ENCODE measurements at regions of chr13 and their contacts with region 1.

Region 1: GRCh38 chr13:43041369-43041921 is 18.1 kb downstream of the DNAJC15 start:
- DNase-seq: no peak
- H3K4me3 Mint-ChIP-seq: no peak overlapping the region
- H3K27ac Mint-ChIP-seq: no peak overlapping the region
- H3K4me1 Mint-ChIP-seq: peaks cover 62% of the 10 kb centered on the region
- H3K27me3 Mint-ChIP-seq: no peaks in the 10 kb centered on the region

Region 2: DNA sequence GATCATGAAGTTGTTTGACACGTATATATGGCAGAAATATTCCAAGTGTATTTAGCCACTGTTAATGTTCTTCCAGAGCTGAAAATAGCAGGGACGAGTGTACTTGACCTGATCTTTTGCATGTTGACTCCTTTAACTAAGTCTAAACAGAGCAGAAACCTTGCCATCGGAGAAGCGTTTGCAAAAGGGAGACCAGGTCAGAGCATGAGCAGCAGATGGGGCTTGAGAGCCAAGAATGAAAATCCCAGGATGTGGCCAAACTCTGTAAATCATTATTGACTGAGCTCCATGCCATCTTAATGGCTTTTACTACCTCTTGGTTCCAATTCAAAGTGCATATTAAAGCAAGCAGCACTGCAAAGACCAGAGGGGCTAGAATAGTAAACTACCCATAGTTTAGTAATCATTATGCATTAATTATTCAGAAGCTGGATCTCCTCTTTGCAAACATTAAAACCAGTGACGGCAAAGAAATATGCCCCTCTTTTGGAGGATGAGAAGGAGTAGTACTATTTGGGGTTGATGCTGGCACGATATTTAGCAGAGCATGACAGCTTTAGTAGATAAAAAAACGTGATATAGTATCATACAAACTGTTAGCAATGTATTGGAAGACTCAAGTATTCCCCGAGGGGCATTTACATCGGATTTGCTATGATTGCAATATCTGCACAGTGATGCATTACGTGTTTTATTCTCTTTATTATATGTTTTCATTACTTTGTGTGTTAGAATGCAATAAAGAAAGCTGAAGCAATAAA is 204.3 kb before region 1 on chr13:
- CTCF ChIA-PET with region 1: no interaction called
- POLR2A ChIA-PET with region 1: no interaction called
- intact Hi-C with region 1: no loop called
- DNase-seq: no peak
- H3K4me3 Mint-ChIP-seq: no peak overlapping the region
- H3K27ac Mint-ChIP-seq: no peak overlapping the region
- H3K4me1 Mint-ChIP-seq: peaks cover 3% of the 10 kb centered on the region
- H3K27me3 Mint-ChIP-seq: peaks cover 1% of the 10 kb centered on the region

Region 3: DNA sequence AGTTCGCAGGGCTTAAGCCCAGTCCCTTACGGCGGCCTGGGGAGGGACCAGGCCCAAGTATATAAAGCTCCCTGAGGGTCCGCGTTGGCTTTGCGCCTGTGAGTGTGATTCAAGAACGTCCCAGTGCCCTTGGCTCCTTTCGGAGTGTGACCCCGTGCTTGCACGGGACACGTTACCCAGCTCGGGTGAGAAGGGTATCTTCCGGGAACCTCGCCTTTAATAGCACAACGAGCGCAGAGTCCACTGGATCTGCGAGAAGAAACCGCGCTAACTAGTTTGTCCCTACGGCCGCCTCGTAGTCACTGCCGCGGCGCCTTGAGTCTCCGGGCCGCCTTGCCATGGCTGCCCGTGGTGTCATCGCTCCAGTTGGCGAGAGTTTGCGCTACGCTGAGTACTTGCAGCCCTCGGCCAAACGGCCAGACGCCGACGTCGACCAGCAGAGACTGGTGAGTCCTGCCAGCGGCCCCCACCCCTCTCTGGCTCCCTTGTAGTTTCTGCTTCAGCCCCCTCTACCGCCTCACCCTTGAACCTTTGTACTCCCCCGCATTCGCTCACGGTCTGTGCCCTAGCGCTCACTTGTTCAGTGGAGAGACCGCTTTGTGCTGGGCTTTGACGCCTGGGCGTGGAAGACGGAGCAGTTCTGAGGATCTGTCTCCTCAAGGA is 18.0 kb before region 1 on chr13 and contains the start of gene DNAJC15:
- CTCF ChIA-PET with region 1: no interaction called
- POLR2A ChIA-PET with region 1: interaction called, 6 read pairs
- intact Hi-C with region 1: loop called (anchors 2 kb)
- DNase-seq: peak; percentile 89
- H3K4me3 Mint-ChIP-seq: peak within 1 kb of the TSS; percentile 97
- H3K27ac Mint-ChIP-seq: peak within 1 kb of the TSS; percentile 93
- H3K4me1 Mint-ChIP-seq: peaks cover 30% of the 10 kb centered on the region
- H3K27me3 Mint-ChIP-seq: no peaks in the 10 kb centered on the region
- total RNA-seq, gene DNAJC15: 16.4 to 17.4 TPM

Region 4: DNA sequence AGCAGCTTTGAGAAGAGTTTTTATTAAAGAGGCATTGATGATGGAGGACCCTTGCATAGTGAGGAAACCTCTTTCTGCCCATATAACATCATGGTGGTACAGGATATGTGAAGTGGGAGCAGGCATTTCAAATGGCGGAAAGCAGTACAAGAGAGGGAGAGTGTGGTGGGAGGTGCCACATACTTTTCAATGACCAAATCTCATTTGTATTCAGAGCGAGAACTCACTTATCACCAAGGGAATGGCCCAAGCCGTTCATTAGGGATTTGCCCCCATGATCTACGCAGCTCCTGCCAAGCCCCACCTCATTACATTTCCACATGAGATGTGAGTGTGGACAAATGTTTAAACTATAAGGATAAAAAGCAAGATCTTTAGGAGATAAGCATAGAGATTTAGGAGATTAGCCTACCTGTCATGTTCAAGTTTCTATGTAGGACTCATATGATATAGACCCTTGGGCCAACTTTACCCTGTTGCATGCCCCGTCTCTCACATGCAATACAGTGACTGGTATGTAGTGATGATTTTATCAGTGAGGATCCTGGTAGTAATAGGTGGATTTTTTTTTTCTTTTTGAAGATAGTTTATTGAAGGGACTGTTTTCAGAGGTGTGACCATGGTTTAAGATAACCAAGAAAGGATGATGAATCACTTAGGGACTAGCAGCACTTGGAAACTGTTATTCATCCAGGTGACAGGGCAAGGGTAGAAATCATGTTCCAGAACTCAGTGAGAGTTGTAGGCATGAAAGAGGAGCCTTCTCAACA is 20.2 kb after region 1 on chr13:
- CTCF ChIA-PET with region 1: no interaction called
- POLR2A ChIA-PET with region 1: interaction called, 3 read pairs
- intact Hi-C with region 1: loop called (anchors 1 kb)
- DNase-seq: peak; percentile 29
- H3K4me3 Mint-ChIP-seq: no peak overlapping the region
- H3K27ac Mint-ChIP-seq: peak overlapping the region; percentile 3
- H3K4me1 Mint-ChIP-seq: peaks cover 46% of the 10 kb centered on the region
- H3K27me3 Mint-ChIP-seq: no peaks in the 10 kb centered on the region

Region 5: GRCh38 chr13:43074824-43075510 is 33.5 kb after region 1 on chr13:
- CTCF ChIA-PET with region 1: no interaction called
- POLR2A ChIA-PET with region 1: no interaction called
- intact Hi-C with region 1: loop called (anchors 2 kb)
- DNase-seq: peak; percentile 46
- H3K4me3 Mint-ChIP-seq: no peak overlapping the region
- H3K27ac Mint-ChIP-seq: no peak overlapping the region
- H3K4me1 Mint-ChIP-seq: peaks cover 54% of the 10 kb centered on the region
- H3K27me3 Mint-ChIP-seq: no peaks in the 10 kb centered on the region

Region 6: GRCh38 chr13:43094901-43095300 is 53.5 kb after region 1 on chr13:
- CTCF ChIA-PET with region 1: no interaction called
- POLR2A ChIA-PET with region 1: no interaction called
- intact Hi-C with region 1: loop called (anchors 1 kb)
- DNase-seq: no peak
- H3K4me3 Mint-ChIP-seq: no peak overlapping the region
- H3K27ac Mint-ChIP-seq: peak overlapping the region; percentile 40
- H3K4me1 Mint-ChIP-seq: peaks cover 22% of the 10 kb centered on the region
- H3K27me3 Mint-ChIP-seq: no peaks in the 10 kb centered on the region

Region 7: GRCh38 chr13:43797869-43798268 is 756.4 kb after region 1 on chr13:
- CTCF ChIA-PET with region 1: no interaction called
- POLR2A ChIA-PET with region 1: no interaction called
- intact Hi-C with region 1: loop called (anchors 5 kb)
- DNase-seq: no peak
- H3K4me3 Mint-ChIP-seq: no peak overlapping the region
- H3K27ac Mint-ChIP-seq: no peak overlapping the region
- H3K4me1 Mint-ChIP-seq: peaks cover 33% of the 10 kb centered on the region
- H3K27me3 Mint-ChIP-seq: peaks cover 30% of the 10 kb centered on the region

Measured in activated CD4-positive, alpha-beta memory T cell treated with anti-CD3 and anti-CD28 coated beads for 36 hours (primary cell).